ENCODE measurements at regions of chr12 and their contacts with region 1.

Region 1: GRCh38 chr12:113485330-113485729 is 13.7 kb upstream of the LHX5 start:
- DNase-seq: peak in 1 of 2 experiments; percentile 83
- H3K4me3 ChIP-seq: no peak overlapping the region
- H3K27ac ChIP-seq: no peak overlapping the region
- H3K4me1 ChIP-seq: peaks cover 4 to 24% (median 15%) of the 10 kb centered on the region in 4 experiments; a peak in 5 of 7 replicates
- H3K27me3 ChIP-seq: peaks cover 9 to 22% (median 12%) of the 10 kb centered on the region in 4 experiments; a peak in 5 of 7 replicates
- CTCF ChIP-seq: no peak
- EP300 ChIP-seq: no peak
- POLR2A ChIP-seq: no peak
- RAD21 ChIP-seq: no peak

Region 2: GRCh38 chr12:113500782-113501311 is 15.5 kb after region 1 on chr12:
- CTCF ChIA-PET with region 1: interaction called, 10 read pairs
- POLR2A ChIA-PET with region 1: interaction called, 6 read pairs
- DNase-seq: no peak
- H3K4me3 ChIP-seq: peak overlapping the region in 3 of 4 experiments; percentile 0 to 21 (median 20); a peak in 1 of 8 replicates
- H3K27ac ChIP-seq: peak overlapping the region; percentile 56; the same call in 1 of the 2 replicates
- H3K4me1 ChIP-seq: peaks cover 7 to 18% (median 15%) of the 10 kb centered on the region in 4 experiments
- H3K27me3 ChIP-seq: peaks cover 0 to 3% (median 0%) of the 10 kb centered on the region in 4 experiments; a peak in 1 of 7 replicates
- CTCF ChIP-seq: no peak
- EP300 ChIP-seq: no peak
- POLR2A ChIP-seq: no peak
- RAD21 ChIP-seq: no peak